ENCODE measurements at regions of chr5 and their contacts with region 1.

Region 1: GRCh38 chr5:6404129-6404528 is 25.8 kb upstream of the MED10 start:
- DNase-seq: no peak
- H3K4me3 ChIP-seq: no peak overlapping the region
- H3K27ac ChIP-seq: no peak overlapping the region
- H3K4me1 ChIP-seq: no peaks in the 10 kb centered on the region
- H3K27me3 ChIP-seq: no peaks in the 10 kb centered on the region
- CTCF ChIP-seq: no peak
- POLR2A ChIP-seq: no peak

Region 2: DNA sequence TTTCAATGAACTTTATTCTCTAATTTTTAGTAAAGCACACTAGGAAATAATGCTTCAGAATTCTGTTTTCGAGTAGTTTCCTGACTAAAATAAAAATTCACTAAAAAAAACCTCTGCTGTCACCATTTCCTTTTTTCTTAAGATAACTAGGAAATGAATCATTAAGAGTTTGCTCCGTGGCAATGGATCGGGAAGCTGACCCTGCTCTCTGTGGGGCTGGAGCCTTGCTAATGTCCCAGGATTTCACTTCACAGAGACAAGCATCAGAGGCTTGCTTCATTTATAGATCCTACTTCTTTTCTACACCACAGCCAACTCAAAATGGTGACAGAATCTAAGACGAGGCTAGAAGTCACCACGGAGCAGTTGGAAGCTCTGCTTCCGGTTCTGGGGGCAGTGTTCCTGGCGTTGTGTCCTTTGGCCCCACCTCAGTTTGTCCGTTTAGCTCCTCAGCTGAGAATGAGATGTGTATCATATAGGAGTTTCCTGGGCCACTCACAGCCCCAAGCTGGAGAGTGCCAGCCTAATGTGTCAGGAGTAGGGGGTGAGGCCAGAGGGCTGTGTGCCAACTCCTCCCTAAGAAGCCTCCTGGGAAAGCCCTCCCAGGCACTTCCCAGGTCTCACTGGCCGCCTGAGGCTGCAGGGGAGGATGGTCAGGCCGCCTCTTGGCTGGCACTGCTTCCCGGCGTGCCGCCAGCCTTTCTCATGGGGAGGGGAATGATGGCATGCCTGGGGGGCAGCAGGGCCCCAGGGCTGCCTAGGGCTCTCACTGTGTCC is 328.7 kb after region 1 on chr5:
- intact Hi-C with region 1: loop called (anchors 5 kb)
- DNase-seq: peak in 1 of 2 donors; percentile 32
- H3K4me3 ChIP-seq: no peak overlapping the region
- H3K27ac ChIP-seq: peak overlapping the region; percentile 38 to 45
- H3K4me1 ChIP-seq: peaks cover 0 to 14% of the 10 kb centered on the region in 2 donors
- H3K27me3 ChIP-seq: no peaks in the 10 kb centered on the region
- CTCF ChIP-seq: no peak
- POLR2A ChIP-seq: no peak

Measured in uterus (tissue), 4 donors.